A673 (cell line): ENCODE measurements at regions of chr2 and their contacts with region 1.

Region 1: DNA sequence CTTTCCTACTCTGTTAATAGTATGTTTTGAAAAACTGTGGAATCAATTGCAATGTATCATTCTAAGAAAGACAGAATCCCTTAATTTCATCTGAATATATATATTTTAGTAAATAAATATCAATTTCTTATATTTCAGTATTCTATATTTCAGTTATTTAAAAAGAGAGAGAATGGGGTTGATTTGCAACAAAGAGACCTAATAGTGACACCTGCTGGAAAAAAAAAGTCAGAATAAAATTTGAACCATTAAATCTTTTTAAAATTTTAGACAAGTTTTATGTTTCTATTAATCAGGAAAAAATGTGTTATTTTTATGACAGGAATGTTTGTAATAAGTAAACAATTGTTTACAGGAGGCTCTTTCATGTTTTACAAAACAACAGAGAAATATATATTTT is 20.7 kb upstream of the CCNT2 start:
- DNase-seq: no peak
- H3K4me3 ChIP-seq: no peak overlapping the region
- H3K27ac ChIP-seq: no peak overlapping the region
- H3K4me1 ChIP-seq: no peaks in the 10 kb centered on the region
- H3K27me3 ChIP-seq: peaks cover 4% of the 10 kb centered on the region
- CTCF ChIP-seq: peak; percentile 50; the same call in 1 of the 2 replicates

Region 2: GRCh38 chr2:134454931-134455330 is 443.0 kb before region 1 on chr2:
- CTCF ChIA-PET with region 1: interaction called, 3 read pairs
- POLR2A ChIA-PET with region 1: no interaction called
- intact Hi-C with region 1: loop called (anchors 5 kb)
- DNase-seq: no peak
- H3K4me3 ChIP-seq: no peak overlapping the region
- H3K27ac ChIP-seq: no peak overlapping the region
- H3K4me1 ChIP-seq: no peaks in the 10 kb centered on the region
- H3K27me3 ChIP-seq: no peaks in the 10 kb centered on the region
- CTCF ChIP-seq: no peak

Region 3: GRCh38 chr2:134782792-134783191 is 115.1 kb before region 1 on chr2:
- CTCF ChIA-PET with region 1: no interaction called
- POLR2A ChIA-PET with region 1: no interaction called
- intact Hi-C with region 1: loop called (anchors 5 kb)
- DNase-seq: peak; percentile 27
- H3K4me3 ChIP-seq: no peak overlapping the region
- H3K27ac ChIP-seq: no peak overlapping the region
- H3K4me1 ChIP-seq: no peaks in the 10 kb centered on the region
- H3K27me3 ChIP-seq: peaks cover 5% of the 10 kb centered on the region
- CTCF ChIP-seq: peak; percentile 48